Naive thymus-derived CD4-positive, alpha-beta T cell (primary cell): ENCODE measurements at regions of chr17 and their contacts with region 1.

Region 1: DNA sequence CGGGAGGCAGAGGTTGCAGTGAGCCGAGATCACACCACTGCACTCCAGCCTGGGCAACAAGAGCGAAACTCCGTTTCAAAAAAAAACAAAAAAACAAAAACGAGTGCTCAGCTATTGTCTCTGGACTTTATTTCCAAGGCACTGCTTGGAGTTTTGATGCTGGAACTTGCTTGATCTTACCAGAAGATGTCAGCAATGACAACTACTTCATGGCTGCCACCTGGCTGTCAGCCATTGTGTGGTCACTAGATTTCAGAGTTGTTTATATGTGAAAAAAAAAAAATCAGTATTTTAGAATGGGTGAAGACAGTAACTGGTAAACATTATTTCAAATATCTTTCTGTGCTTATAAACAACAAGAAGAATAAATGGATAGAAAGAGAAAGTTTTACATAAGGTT is 26.3 kb upstream of the OR4D1 start:
- DNase-seq: peak in 7 of 9 donors; percentile 36 to 70 (median 56)
- ATAC-seq: peak; percentile 81
- H3K4me3 ChIP-seq: no peak overlapping the region
- H3K4me3 Mint-ChIP-seq: peak overlapping the region in 2 of 10 donors; percentile 27 to 33
- H3K27ac ChIP-seq: no peak overlapping the region
- H3K27ac Mint-ChIP-seq: peak overlapping the region in 4 of 9 donors; percentile 10 to 32 (median 12)
- H3K4me1 ChIP-seq: peaks cover 5 to 8% of the 10 kb centered on the region in 2 donors
- H3K4me1 Mint-ChIP-seq: peaks cover 2 to 28% (median 14%) of the 10 kb centered on the region in 7 donors
- H3K27me3 ChIP-seq: no peaks in the 10 kb centered on the region
- H3K27me3 Mint-ChIP-seq: peaks cover 5 to 32% (median 7%) of the 10 kb centered on the region in 5 donors

Region 2: GRCh38 chr17:58156839-58157803 is 35.2 kb after region 1 on chr17:
- CTCF ChIA-PET with region 1: interaction called, 17 read pairs
- POLR2A ChIA-PET with region 1: interaction called, 7 read pairs
- intact Hi-C with region 1: loop called (anchors 1 to 2 kb)
- DNase-seq: peak; percentile 31 to 61 (median 55)
- ATAC-seq: peak; percentile 74
- H3K4me3 ChIP-seq: peak overlapping the region; percentile 56
- H3K4me3 Mint-ChIP-seq: peak overlapping the region; percentile 90 to 97 (median 94)
- H3K27ac ChIP-seq: peak overlapping the region; percentile 88
- H3K27ac Mint-ChIP-seq: peak overlapping the region; percentile 86 to 98 (median 93)
- H3K4me1 ChIP-seq: peaks cover 40 to 48% of the 10 kb centered on the region in 2 donors
- H3K4me1 Mint-ChIP-seq: peaks cover 41 to 86% (median 73%) of the 10 kb centered on the region in 7 donors
- H3K27me3 ChIP-seq: no peaks in the 10 kb centered on the region
- H3K27me3 Mint-ChIP-seq: peaks cover 0 to 29% (median 0%) of the 10 kb centered on the region in 5 donors

Region 3: GRCh38 chr17:58249270-58250133 is 127.6 kb after region 1 on chr17:
- CTCF ChIA-PET with region 1: no interaction called
- POLR2A ChIA-PET with region 1: no interaction called
- intact Hi-C with region 1: loop called in 1 of 2 experiments (anchors 1 kb)
- DNase-seq: peak; percentile 47 to 83 (median 74)
- ATAC-seq: peak; percentile 98
- H3K4me3 ChIP-seq: peak overlapping the region; percentile 65
- H3K4me3 Mint-ChIP-seq: peak overlapping the region; percentile 58 to 87 (median 81)
- H3K27ac ChIP-seq: no peak overlapping the region
- H3K27ac Mint-ChIP-seq: no peak overlapping the region
- H3K4me1 ChIP-seq: no peaks in the 10 kb centered on the region
- H3K4me1 Mint-ChIP-seq: peaks cover 0 to 21% (median 10%) of the 10 kb centered on the region in 7 donors
- H3K27me3 ChIP-seq: no peaks in the 10 kb centered on the region
- H3K27me3 Mint-ChIP-seq: peaks cover 3 to 50% (median 14%) of the 10 kb centered on the region in 5 donors